Naive thymus-derived CD4-positive, alpha-beta T cell (primary cell): ENCODE measurements at regions of chr11 and their contacts with region 1.

Region 1: GRCh38 chr11:86244522-86245368 is at the start of gene EED:
- DNase-seq: peak; percentile 88 to 94 (median 92)
- ATAC-seq: peak; percentile 94
- H3K4me3 ChIP-seq: peak within 1 kb of the TSS; percentile 100
- H3K4me3 Mint-ChIP-seq: no peak within 1 kb of the TSS
- H3K27ac ChIP-seq: peak within 1 kb of the TSS; percentile 97
- H3K27ac Mint-ChIP-seq: no peak within 1 kb of the TSS
- H3K4me1 ChIP-seq: peaks cover 32 to 33% of the 10 kb centered on the region in 2 donors
- H3K4me1 Mint-ChIP-seq: peaks cover 0 to 34% (median 1%) of the 10 kb centered on the region in 7 donors
- H3K27me3 ChIP-seq: no peaks in the 10 kb centered on the region
- H3K27me3 Mint-ChIP-seq: peaks cover 0 to 5% (median 0%) of the 10 kb centered on the region in 5 donors
- total RNA-seq, gene EED: 22.2 to 62.4 (median 35.5) TPM

Region 2: GRCh38 chr11:85627998-85628770 is 616.6 kb before region 1 on chr11 and contains the start of gene TMEM126B:
- CTCF ChIA-PET with region 1: no interaction called
- POLR2A ChIA-PET with region 1: interaction called, 14 read pairs
- intact Hi-C with region 1: loop called (anchors 1 kb)
- DNase-seq: peak; percentile 85 to 95 (median 94)
- ATAC-seq: peak; percentile 99
- H3K4me3 ChIP-seq: peak within 1 kb of the TSS; percentile 98
- H3K4me3 Mint-ChIP-seq: peak within 1 kb of the TSS; percentile 84 to 98 (median 94)
- H3K27ac ChIP-seq: peak within 1 kb of the TSS; percentile 85
- H3K27ac Mint-ChIP-seq: peak within 1 kb of the TSS; percentile 89 to 97 (median 94)
- H3K4me1 ChIP-seq: peaks cover 13 to 22% of the 10 kb centered on the region in 2 donors
- H3K4me1 Mint-ChIP-seq: peaks cover 17 to 67% (median 48%) of the 10 kb centered on the region in 7 donors
- H3K27me3 ChIP-seq: no peaks in the 10 kb centered on the region
- H3K27me3 Mint-ChIP-seq: peaks cover 0 to 9% (median 0%) of the 10 kb centered on the region in 5 donors
- total RNA-seq, gene TMEM126B: 22.1 to 50.4 (median 36.4) TPM

Region 3: DNA sequence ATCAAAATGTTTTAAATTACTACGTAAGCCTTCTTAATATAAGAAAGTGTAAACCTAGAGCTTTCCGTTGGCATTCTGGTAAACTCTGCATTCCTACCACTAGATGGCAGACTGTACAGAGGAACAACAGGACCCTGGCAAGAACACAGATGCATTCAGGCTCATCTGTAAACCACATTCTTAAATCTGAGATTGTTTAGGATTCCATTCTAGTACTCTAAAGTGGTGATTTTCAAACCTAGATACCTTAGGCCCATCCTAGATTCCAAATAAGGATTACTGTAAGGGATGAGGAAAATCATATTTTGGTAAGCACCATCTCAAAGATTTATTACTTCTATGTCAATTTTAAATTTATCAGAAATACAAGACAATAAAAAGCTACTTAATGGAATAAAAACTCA is 202.8 kb before region 1 on chr11:
- CTCF ChIA-PET with region 1: interaction called, 3 read pairs
- POLR2A ChIA-PET with region 1: no interaction called
- intact Hi-C with region 1: loop called (anchors 1 kb)
- DNase-seq: peak in 7 of 9 donors; percentile 63 to 79 (median 71)
- ATAC-seq: peak; percentile 98
- H3K4me3 ChIP-seq: no peak overlapping the region
- H3K4me3 Mint-ChIP-seq: peak overlapping the region in 4 of 10 donors; percentile 1 to 8 (median 5)
- H3K27ac ChIP-seq: peak overlapping the region; percentile 20
- H3K27ac Mint-ChIP-seq: peak overlapping the region in 7 of 9 donors; percentile 11 to 68 (median 38)
- H3K4me1 ChIP-seq: peaks cover 19 to 54% of the 10 kb centered on the region in 2 donors
- H3K4me1 Mint-ChIP-seq: peaks cover 49 to 73% (median 67%) of the 10 kb centered on the region in 7 donors
- H3K27me3 ChIP-seq: no peaks in the 10 kb centered on the region
- H3K27me3 Mint-ChIP-seq: no peaks in the 10 kb centered on the region

Region 4: DNA sequence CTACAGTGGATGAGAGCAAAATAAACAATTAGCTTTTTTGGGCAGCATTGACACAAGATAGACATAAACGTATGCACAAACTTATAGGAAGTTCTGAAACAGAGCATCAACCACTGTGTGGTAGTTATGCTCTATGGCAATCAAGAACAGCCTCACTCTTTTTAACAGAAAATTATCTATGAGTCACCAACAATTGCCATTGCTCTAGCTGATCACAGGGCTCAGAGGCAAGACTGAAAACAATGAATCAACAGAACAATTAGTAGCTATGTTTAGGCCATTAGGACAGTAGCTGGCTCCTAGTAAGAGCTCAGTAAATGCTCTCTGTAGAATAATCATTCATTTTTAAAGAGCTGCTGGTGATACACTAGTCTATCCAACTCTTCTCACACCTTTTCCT is 140.9 kb before region 1 on chr11:
- CTCF ChIA-PET with region 1: no interaction called
- POLR2A ChIA-PET with region 1: no interaction called
- intact Hi-C with region 1: no loop called
- DNase-seq: no peak
- ATAC-seq: no peak
- H3K4me3 ChIP-seq: no peak overlapping the region
- H3K4me3 Mint-ChIP-seq: no peak overlapping the region
- H3K27ac ChIP-seq: no peak overlapping the region
- H3K27ac Mint-ChIP-seq: no peak overlapping the region
- H3K4me1 ChIP-seq: no peaks in the 10 kb centered on the region
- H3K4me1 Mint-ChIP-seq: peaks cover 0 to 12% (median 3%) of the 10 kb centered on the region in 7 donors
- H3K27me3 ChIP-seq: no peaks in the 10 kb centered on the region
- H3K27me3 Mint-ChIP-seq: peaks cover 3 to 13% (median 9%) of the 10 kb centered on the region in 5 donors

Region 5: DNA sequence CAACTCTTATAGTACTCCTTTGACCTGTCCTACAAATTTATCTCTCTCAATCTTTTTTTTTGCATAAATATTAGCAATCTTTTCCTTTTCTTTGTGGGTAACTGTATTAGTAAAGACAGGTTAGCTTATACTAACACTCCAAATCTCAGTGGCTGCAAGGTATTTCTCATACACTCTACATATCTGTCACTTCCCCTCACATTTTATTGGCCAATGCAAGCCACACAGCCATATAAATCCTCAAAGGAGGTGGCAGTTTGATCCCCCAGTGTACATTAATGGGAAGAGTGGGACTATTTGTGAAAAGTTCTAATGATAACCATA is 42.8 kb before region 1 on chr11:
- CTCF ChIA-PET with region 1: no interaction called
- POLR2A ChIA-PET with region 1: interaction called, 4 read pairs
- intact Hi-C with region 1: loop called (anchors 1 kb)
- DNase-seq: peak in 2 of 9 donors; percentile 7 to 17
- ATAC-seq: peak; percentile 71
- H3K4me3 ChIP-seq: peak overlapping the region; percentile 58
- H3K4me3 Mint-ChIP-seq: no peak overlapping the region
- H3K27ac ChIP-seq: peak overlapping the region; percentile 12
- H3K27ac Mint-ChIP-seq: no peak overlapping the region
- H3K4me1 ChIP-seq: peaks cover 4 to 11% of the 10 kb centered on the region in 2 donors
- H3K4me1 Mint-ChIP-seq: peaks cover 0 to 8% (median 0%) of the 10 kb centered on the region in 7 donors
- H3K27me3 ChIP-seq: no peaks in the 10 kb centered on the region
- H3K27me3 Mint-ChIP-seq: no peaks in the 10 kb centered on the region

Region 6: DNA sequence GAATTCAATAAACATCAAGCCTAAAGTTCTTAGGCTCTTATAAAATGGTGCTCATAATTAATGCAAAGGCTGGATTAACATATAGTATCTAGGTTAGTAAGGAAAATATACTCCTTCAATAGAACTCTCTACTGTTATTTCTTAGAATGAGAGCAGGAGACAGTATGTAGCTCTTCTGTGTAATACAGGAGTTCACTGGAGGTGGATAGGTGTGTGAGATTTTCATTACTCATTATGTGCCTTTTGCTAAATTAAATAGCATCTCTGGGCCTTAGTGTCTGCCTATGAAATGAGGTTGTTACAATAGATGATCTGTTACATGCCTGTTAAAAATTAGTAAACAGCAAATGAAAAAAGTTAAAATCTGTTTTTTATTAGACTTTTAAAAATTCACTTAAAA is 20.4 kb after region 1 on chr11:
- CTCF ChIA-PET with region 1: no interaction called
- POLR2A ChIA-PET with region 1: interaction called, 3 read pairs
- intact Hi-C with region 1: loop called in 1 of 2 experiments (anchors 2 kb)
- DNase-seq: no peak
- ATAC-seq: no peak
- H3K4me3 ChIP-seq: no peak overlapping the region
- H3K4me3 Mint-ChIP-seq: no peak overlapping the region
- H3K27ac ChIP-seq: no peak overlapping the region
- H3K27ac Mint-ChIP-seq: no peak overlapping the region
- H3K4me1 ChIP-seq: peaks cover 0 to 5% of the 10 kb centered on the region in 2 donors
- H3K4me1 Mint-ChIP-seq: peaks cover 1 to 18% (median 5%) of the 10 kb centered on the region in 7 donors
- H3K27me3 ChIP-seq: no peaks in the 10 kb centered on the region
- H3K27me3 Mint-ChIP-seq: no peaks in the 10 kb centered on the region

Region 7: DNA sequence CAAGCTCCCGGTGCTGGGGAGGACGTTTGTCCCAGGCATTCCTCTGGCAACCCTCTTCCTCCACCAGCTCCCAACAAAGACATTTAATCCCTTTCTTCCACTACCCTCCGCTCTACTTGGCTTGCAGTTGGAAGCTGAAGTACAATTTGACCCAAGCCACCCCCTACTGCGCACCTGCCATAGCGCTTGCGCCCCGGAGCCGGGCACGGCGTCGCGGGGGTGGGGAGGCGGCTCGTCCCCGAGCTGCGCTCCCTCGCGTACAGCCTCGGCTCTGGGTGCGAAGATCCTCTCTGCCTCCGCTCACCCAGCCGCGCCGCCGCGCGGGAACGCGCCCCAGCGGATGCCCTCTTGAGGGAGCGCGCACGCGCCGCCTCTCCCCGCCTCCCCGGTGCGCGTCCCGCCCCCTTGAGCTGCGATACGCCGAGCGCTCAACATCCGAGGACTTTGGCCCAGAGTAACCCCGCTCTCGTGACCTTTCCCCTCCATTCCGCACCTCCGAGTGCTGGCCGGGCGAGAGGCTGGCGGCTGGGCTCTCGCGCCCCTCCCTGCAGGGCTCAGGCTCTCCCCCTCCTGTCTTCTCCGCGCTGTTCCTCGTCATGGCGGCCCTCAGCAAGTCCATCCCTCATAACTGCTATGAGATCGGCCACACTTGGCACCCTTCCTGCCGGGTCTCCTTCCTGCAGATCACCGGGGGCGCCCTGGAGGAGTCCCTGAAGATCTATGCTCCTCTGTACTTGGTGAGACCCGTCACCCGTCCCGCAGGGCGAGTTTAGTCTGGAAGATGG is 792.9 kb after region 1 on chr11 and contains the start of gene TMEM135:
- CTCF ChIA-PET with region 1: no interaction called
- POLR2A ChIA-PET with region 1: no interaction called
- intact Hi-C with region 1: loop called in 1 of 2 experiments (anchors 2 kb)
- DNase-seq: peak; percentile 82 to 96 (median 90)
- ATAC-seq: peak; percentile 99
- H3K4me3 ChIP-seq: peak within 1 kb of the TSS; percentile 97
- H3K4me3 Mint-ChIP-seq: peak within 1 kb of the TSS; percentile 92 to 99 (median 97)
- H3K27ac ChIP-seq: peak within 1 kb of the TSS; percentile 69
- H3K27ac Mint-ChIP-seq: peak within 1 kb of the TSS; percentile 77 to 96 (median 93)
- H3K4me1 ChIP-seq: peaks cover 11 to 15% of the 10 kb centered on the region in 2 donors
- H3K4me1 Mint-ChIP-seq: peaks cover 37 to 68% (median 58%) of the 10 kb centered on the region in 7 donors
- H3K27me3 ChIP-seq: no peaks in the 10 kb centered on the region
- H3K27me3 Mint-ChIP-seq: peaks cover 0 to 19% (median 0%) of the 10 kb centered on the region in 5 donors
- total RNA-seq, gene TMEM135: 8.3 to 26.8 (median 12.8) TPM